Body of pancreas (tissue), 4 donors: ENCODE measurements at regions of chr17 and their contacts with region 1.

Region 1: DNA sequence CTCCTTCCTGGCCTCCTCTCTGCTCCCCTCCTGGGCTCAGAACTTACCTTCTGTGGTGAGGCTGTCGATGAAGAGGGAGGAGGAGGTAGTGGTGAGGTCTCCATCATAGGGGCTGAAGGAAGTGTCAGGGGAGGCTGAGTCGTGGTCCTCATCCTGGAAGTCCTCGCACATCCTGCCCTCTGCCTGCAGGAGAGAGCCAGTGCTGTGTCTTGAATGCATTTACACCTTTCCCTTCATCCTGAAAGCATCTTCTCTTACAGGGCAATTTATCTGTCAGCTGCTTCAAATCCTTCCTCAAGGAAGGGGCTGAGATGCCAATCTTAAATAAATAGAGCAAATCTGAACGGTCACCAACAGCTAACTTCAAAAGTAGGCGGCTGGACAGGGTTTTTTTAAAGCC is 73.6 kb downstream of the PLXDC1 start:
- DNase-seq: no peak
- ATAC-seq: no peak
- H3K4me3 ChIP-seq: no peak overlapping the region
- H3K27ac ChIP-seq: no peak overlapping the region
- H3K4me1 ChIP-seq: no peaks in the 10 kb centered on the region
- H3K27me3 ChIP-seq: no peaks in the 10 kb centered on the region
- CTCF ChIP-seq: no peak
- POLR2A ChIP-seq: no peak

Region 2: GRCh38 chr17:39144416-39144840 is 66.6 kb after region 1 on chr17:
- intact Hi-C with region 1: loop called (anchors 10 kb)
- DNase-seq: peak; percentile 84 to 95 (median 92)
- ATAC-seq: peak; percentile 92
- H3K4me3 ChIP-seq: no peak overlapping the region
- H3K27ac ChIP-seq: peak overlapping the region in 3 of 4 donors; percentile 35 to 53 (median 53)
- H3K4me1 ChIP-seq: peaks cover 15% of the 10 kb centered on the region
- H3K27me3 ChIP-seq: no peaks in the 10 kb centered on the region
- CTCF ChIP-seq: no peak
- POLR2A ChIP-seq: no peak

Region 3: GRCh38 chr17:39400547-39401411 is 322.9 kb after region 1 on chr17:
- intact Hi-C with region 1: no loop called
- DNase-seq: peak in 1 of 4 donors; percentile 12
- ATAC-seq: peak; percentile 8
- H3K4me3 ChIP-seq: peak overlapping the region; percentile 82 to 94
- H3K27ac ChIP-seq: peak overlapping the region; percentile 74 to 92 (median 82)
- H3K4me1 ChIP-seq: peaks cover 27% of the 10 kb centered on the region
- H3K27me3 ChIP-seq: no peaks in the 10 kb centered on the region
- CTCF ChIP-seq: no peak
- POLR2A ChIP-seq: no peak